T-cell (primary cell): ENCODE measurements at regions of chr1 and their contacts with region 1.

Region 1: DNA sequence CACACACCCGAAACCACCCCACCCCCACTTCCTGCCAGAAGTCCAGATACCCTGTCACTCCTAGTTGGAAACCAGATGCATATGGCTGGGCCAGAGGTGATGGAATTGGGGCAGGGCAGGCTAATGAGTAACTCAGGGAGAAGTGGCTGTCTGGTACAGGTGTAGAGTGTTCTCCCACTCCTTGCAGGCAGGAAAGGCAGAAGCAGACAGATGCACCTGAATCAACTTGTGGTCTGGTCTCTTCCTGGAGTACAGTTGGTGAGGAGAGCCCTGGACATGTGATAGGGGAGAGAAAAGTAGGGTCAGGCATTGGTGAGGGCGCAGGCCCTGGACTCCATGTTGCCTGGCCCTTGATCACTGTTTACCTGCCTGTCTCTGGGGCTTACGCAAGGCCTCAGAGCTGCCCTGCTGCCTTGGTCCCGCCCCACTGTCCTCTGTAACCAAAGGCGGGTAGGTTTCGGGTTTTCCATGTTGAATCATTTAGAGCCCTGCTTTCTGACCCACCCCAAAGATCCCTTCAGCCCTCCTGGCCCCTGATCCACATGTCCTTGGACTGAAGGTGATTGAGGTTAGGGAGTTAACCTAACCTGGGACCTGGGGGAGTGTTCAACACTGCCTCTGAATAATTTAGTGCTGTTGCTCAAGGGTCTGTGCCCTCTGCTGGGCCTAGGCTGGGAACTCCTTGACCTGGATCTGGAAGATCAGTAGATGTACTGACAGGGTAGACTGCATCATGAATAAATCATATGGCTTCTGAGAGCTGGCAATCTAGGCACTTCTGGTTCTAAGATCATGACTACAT is 2.6 kb downstream of the CGN start:
- DNase-seq: no peak
- ATAC-seq: no peak
- H3K4me3 ChIP-seq: no peak overlapping the region
- H3K4me3 Mint-ChIP-seq: peak overlapping the region in 1 of 3 donors; percentile 83
- H3K27ac ChIP-seq: no peak overlapping the region
- H3K27ac Mint-ChIP-seq: no peak overlapping the region
- H3K4me1 ChIP-seq: peaks cover 12 to 29% of the 10 kb centered on the region in 2 experiments
- H3K4me1 Mint-ChIP-seq: peaks cover 25 to 30% (median 27%) of the 10 kb centered on the region in 3 donors
- H3K27me3 ChIP-seq: peaks cover 0 to 10% of the 10 kb centered on the region in 2 experiments
- H3K27me3 Mint-ChIP-seq: no peaks in the 10 kb centered on the region

Region 2: GRCh38 chr1:151311589-151312331 is 202.1 kb before region 1 on chr1:
- CTCF ChIA-PET with region 1: no interaction called
- POLR2A ChIA-PET with region 1: no interaction called
- DNase-seq: peak in 16 of 35 experiments; percentile 7 to 61 (median 21)
- ATAC-seq: peak; percentile 59 to 99 (median 96)
- H3K4me3 ChIP-seq: no peak overlapping the region
- H3K4me3 Mint-ChIP-seq: peak overlapping the region in 1 of 3 donors; percentile 3
- H3K27ac ChIP-seq: peak overlapping the region; percentile 0
- H3K27ac Mint-ChIP-seq: peak overlapping the region; percentile 85 to 87
- H3K4me1 ChIP-seq: peaks cover 0 to 18% of the 10 kb centered on the region in 2 experiments
- H3K4me1 Mint-ChIP-seq: peaks cover 36 to 51% (median 49%) of the 10 kb centered on the region in 3 donors
- H3K27me3 ChIP-seq: no peaks in the 10 kb centered on the region
- H3K27me3 Mint-ChIP-seq: no peaks in the 10 kb centered on the region

Region 3: GRCh38 chr1:151459331-151460046 is 54.3 kb before region 1 on chr1 and contains the start of gene POGZ:
- CTCF ChIA-PET with region 1: no interaction called
- POLR2A ChIA-PET with region 1: no interaction called
- DNase-seq: peak; percentile 84 to 96 (median 93)
- ATAC-seq: peak; percentile 70 to 78 (median 72)
- H3K4me3 ChIP-seq: peak within 1 kb of the TSS; percentile 75 to 90
- H3K4me3 Mint-ChIP-seq: peak within 1 kb of the TSS; percentile 86 to 96 (median 89)
- H3K27ac ChIP-seq: peak within 1 kb of the TSS; percentile 88
- H3K27ac Mint-ChIP-seq: peak within 1 kb of the TSS; percentile 91 to 94
- H3K4me1 ChIP-seq: peaks cover 5 to 20% of the 10 kb centered on the region in 2 experiments
- H3K4me1 Mint-ChIP-seq: peaks cover 32 to 35% (median 34%) of the 10 kb centered on the region in 3 donors
- H3K27me3 ChIP-seq: peaks cover 0 to 4% of the 10 kb centered on the region in 2 experiments
- H3K27me3 Mint-ChIP-seq: peaks cover 16 to 21% of the 10 kb centered on the region in 2 donors
- total RNA-seq, gene POGZ: 93.8 to 133 (median 96.7) TPM

Region 4: GRCh38 chr1:151494741-151495281 is 19.0 kb before region 1 on chr1:
- CTCF ChIA-PET with region 1: no interaction called
- POLR2A ChIA-PET with region 1: interaction called in 1 of 2 experiments, 19 read pairs
- DNase-seq: no peak
- ATAC-seq: peak in 2 of 4 experiments; percentile 31 to 38
- H3K4me3 ChIP-seq: no peak overlapping the region
- H3K4me3 Mint-ChIP-seq: no peak overlapping the region
- H3K27ac ChIP-seq: no peak overlapping the region
- H3K27ac Mint-ChIP-seq: no peak overlapping the region
- H3K4me1 ChIP-seq: no peaks in the 10 kb centered on the region
- H3K4me1 Mint-ChIP-seq: peaks cover 0 to 2% (median 2%) of the 10 kb centered on the region in 3 donors
- H3K27me3 ChIP-seq: peaks cover 0 to 2% of the 10 kb centered on the region in 2 experiments
- H3K27me3 Mint-ChIP-seq: peaks cover 0 to 3% of the 10 kb centered on the region in 2 donors